ENCODE measurements at regions of chr6 and their contacts with region 1.

Region 1: DNA sequence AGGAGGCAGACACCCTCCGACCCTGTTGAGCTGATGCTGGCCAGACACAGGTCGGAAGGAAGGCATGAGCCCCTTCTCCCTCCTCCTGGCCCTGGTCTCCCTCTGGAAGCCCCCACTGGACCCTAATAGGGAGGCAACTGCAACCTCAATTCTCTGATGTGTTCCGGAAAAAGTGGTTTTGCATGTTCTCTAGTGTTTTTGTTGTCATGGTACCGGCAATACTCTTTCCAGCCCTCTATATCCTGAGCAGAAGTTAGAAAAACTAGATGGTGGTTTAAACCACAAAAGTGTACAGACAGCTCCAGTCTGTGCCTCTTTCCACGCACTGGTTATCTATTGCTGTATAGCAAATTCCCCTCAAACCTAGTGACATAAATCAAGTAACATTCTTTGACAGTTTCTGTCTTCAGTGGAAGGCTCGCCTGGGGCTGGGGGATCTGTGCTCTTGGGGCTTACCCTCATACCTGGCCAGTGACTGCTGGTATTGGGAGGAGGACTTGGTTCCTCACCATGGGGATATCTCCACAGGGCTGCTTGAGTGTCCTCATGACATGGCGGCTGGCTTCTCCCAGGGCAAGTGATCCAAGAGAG is 37.0 kb downstream of the SYTL3 start:
- DNase-seq: no peak
- ATAC-seq: no peak; the same call in 2 of the 3 replicates
- H3K4me3 ChIP-seq: no peak overlapping the region
- H3K27ac ChIP-seq: no peak overlapping the region
- H3K4me1 ChIP-seq: no peaks in the 10 kb centered on the region
- H3K27me3 ChIP-seq: peaks cover 43 to 57% of the 10 kb centered on the region in 2 experiments
- CTCF ChIP-seq: no peak
- EP300 ChIP-seq: no peak
- POLR2A ChIP-seq: no peak
- RAD21 ChIP-seq: no peak

Region 2: DNA sequence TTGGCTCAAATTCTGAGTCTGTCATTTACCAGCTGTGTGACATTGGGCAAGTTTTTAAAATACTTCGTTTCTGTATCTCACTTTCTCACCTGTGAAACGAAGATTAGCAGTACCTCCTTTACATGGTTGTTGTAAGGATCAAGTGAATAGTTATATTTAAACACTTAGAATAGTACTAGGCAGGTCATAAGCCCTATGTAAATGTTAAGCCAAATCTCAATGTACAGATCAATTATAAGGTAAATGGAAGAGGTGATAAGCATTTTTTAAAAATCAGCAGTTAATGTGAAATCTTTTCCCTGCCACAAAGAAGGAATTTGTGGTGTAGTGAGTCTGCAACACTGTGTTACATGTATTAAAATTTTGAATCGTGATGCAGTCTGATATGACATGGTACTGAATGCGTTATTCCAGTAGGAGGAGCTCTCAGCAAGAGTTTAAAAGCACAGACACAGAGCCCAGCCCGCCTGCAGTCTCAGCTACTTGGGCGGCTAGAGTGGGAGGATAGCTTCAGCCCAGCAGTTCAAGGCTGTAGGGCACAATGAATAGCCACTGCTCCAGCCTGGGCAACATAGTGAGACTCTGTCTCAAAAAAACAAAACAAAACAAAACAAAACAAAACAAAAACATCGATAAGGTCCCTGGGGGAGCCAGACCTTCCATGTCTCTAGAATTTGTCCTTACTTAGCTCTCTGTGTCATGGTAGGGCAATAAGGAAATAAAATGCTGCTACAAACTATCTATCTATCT is 472.8 kb before region 1 on chr6:
- CTCF ChIA-PET with region 1: interaction called, 23 read pairs
- POLR2A ChIA-PET with region 1: no interaction called
- in situ Hi-C with region 1: loop called (anchors 5 kb)
- intact Hi-C with region 1: loop called (anchors 1 kb)
- DNase-seq: peak; percentile 56 to 87 (median 64)
- ATAC-seq: peak; percentile 100
- H3K4me3 ChIP-seq: no peak overlapping the region
- H3K27ac ChIP-seq: no peak overlapping the region
- H3K4me1 ChIP-seq: peaks cover 3% of the 10 kb centered on the region in 2 experiments; a peak in 2 of 5 replicates
- H3K27me3 ChIP-seq: no peaks in the 10 kb centered on the region
- CTCF ChIP-seq: peak; percentile 84 to 94 (median 89)
- EP300 ChIP-seq: no peak
- POLR2A ChIP-seq: no peak
- RAD21 ChIP-seq: peak; percentile 84 to 95

Region 3: GRCh38 chr6:158660333-158660754 is 26.5 kb before region 1 on chr6:
- CTCF ChIA-PET with region 1: interaction called, 6 read pairs
- POLR2A ChIA-PET with region 1: interaction called, 5 read pairs
- in situ Hi-C with region 1: no loop called
- intact Hi-C with region 1: loop called (anchors 2 kb)
- DNase-seq: peak; percentile 60 to 71 (median 66)
- ATAC-seq: peak; percentile 91
- H3K4me3 ChIP-seq: no peak overlapping the region
- H3K27ac ChIP-seq: no peak overlapping the region
- H3K4me1 ChIP-seq: peaks cover 0 to 2% of the 10 kb centered on the region in 2 experiments; a peak in 1 of 5 replicates
- H3K27me3 ChIP-seq: peaks cover 54 to 62% of the 10 kb centered on the region in 2 experiments
- CTCF ChIP-seq: peak; percentile 76 to 84 (median 83)
- EP300 ChIP-seq: no peak
- POLR2A ChIP-seq: no peak
- RAD21 ChIP-seq: peak; percentile 40 to 72; a peak in 3 of 4 replicates